Caco-2 (cell line): ENCODE measurements at regions of chr21 and their contacts with region 1.

Region 1: DNA sequence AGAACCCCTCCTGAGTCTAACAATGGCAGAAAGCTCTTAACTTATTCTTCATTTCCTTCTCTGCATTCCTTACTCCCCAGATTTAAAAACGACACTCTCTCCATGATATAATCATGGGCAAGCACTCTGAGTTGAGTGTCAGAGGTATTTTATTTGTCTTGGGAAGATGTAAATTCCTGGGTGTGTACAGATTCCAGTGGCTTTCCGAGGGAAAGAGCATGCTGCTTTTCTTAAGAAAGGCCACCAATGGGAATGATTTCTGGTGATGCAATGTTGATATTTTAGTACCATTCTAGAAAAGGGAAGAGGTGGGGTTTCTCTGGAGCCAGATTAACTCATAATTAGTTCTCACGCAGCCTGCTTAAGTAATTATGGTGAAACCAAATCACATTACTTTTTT is 47.7 kb upstream of the BTG3 start:
- DNase-seq: peak in 1 of 2 experiments; percentile 19
- H3K4me3 ChIP-seq: no peak overlapping the region
- H3K4me3 Mint-ChIP-seq: no peak overlapping the region
- H3K27ac Mint-ChIP-seq: peak overlapping the region; percentile 78
- H3K4me1 ChIP-seq: peaks cover 11% of the 10 kb centered on the region; the same call in 1 of the 2 replicates
- H3K4me1 Mint-ChIP-seq: peaks cover 9% of the 10 kb centered on the region
- H3K27me3 ChIP-seq: no peaks in the 10 kb centered on the region
- H3K27me3 Mint-ChIP-seq: no peaks in the 10 kb centered on the region
- CTCF ChIP-seq: no peak

Region 2: DNA sequence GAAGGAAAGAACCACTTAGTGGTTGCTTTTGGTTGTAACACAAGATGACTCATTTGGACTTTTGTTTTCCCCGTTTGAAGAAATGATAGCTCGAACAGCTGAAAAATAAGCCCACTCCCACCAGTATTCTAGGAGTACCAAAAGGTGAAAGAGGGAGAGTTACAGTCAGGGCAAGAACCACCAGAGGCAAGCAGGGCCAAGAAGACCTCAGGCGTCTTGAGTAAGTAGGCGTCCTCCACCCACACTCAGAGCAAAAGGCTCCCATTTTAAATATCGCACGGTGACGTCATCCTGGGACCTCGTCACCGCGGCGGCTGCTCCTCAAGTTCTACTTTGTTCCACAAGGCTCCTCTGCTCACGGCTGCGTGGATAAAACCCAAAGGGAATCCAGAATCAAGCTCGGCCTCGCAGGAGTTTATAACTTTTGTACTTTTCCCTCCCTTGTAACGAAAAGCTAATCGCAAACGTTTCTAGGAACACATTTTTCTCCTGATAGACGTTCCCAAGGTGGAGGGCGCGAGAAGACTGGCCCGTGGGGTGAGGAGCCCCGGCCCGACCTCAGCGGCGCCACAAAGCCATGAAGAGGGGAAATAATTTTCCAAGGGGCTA is 48.9 kb before region 1 on chr21:
- CTCF ChIA-PET with region 1: no interaction called
- POLR2A ChIA-PET with region 1: no interaction called
- intact Hi-C with region 1: loop called (anchors 5 kb)
- DNase-seq: peak; percentile 77 to 80
- H3K4me3 ChIP-seq: peak overlapping the region; percentile 90
- H3K4me3 Mint-ChIP-seq: peak overlapping the region; percentile 95
- H3K27ac Mint-ChIP-seq: peak overlapping the region; percentile 99
- H3K4me1 ChIP-seq: 0 out of 2 replicates have a peak, but pooled peaks cover 8% of the 10 kb centered on the region
- H3K4me1 Mint-ChIP-seq: no peaks in the 10 kb centered on the region
- H3K27me3 ChIP-seq: no peaks in the 10 kb centered on the region
- H3K27me3 Mint-ChIP-seq: no peaks in the 10 kb centered on the region
- CTCF ChIP-seq: no peak